ENCODE measurements at regions of chr12 and their contacts with region 1.

Region 1: GRCh38 chr12:87001102-87001501 is 744.9 kb upstream of the MGAT4C start:
- DNase-seq: no peak
- H3K4me3 ChIP-seq: no peak overlapping the region
- H3K27ac ChIP-seq: no peak overlapping the region
- H3K4me1 ChIP-seq: no peaks in the 10 kb centered on the region
- H3K27me3 ChIP-seq: no peaks in the 10 kb centered on the region
- CTCF ChIP-seq: no peak

Region 2: DNA sequence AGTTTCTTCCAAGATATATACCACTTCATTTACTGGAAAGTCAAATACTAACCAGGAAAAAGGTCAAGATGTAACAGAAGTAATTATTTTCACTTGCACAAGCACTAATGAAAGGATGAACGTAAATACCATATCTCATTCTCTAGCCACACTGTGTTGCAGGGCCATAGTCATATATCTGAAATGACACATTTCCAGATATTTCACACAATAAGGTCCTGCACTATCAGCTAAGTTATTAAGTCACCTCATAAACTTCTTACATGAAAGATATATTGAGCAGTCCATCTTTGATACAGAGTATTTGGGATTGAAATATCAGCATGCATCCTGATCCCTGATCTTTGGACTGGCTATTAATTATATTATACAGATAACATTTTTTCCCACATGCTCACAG is 38.4 kb after region 1 on chr12:
- CTCF ChIA-PET with region 1: no interaction called
- POLR2A ChIA-PET with region 1: interaction called, 11 read pairs
- intact Hi-C with region 1: no loop called
- DNase-seq: no peak
- H3K4me3 ChIP-seq: no peak overlapping the region
- H3K27ac ChIP-seq: no peak overlapping the region
- H3K4me1 ChIP-seq: no peaks in the 10 kb centered on the region
- H3K27me3 ChIP-seq: no peaks in the 10 kb centered on the region
- CTCF ChIP-seq: no peak

Region 3: GRCh38 chr12:87290505-87290904 is 289.4 kb after region 1 on chr12:
- CTCF ChIA-PET with region 1: no interaction called
- POLR2A ChIA-PET with region 1: no interaction called
- intact Hi-C with region 1: no loop called
- DNase-seq: no peak
- H3K4me3 ChIP-seq: no peak overlapping the region
- H3K27ac ChIP-seq: no peak overlapping the region
- H3K4me1 ChIP-seq: no peaks in the 10 kb centered on the region
- H3K27me3 ChIP-seq: no peaks in the 10 kb centered on the region
- CTCF ChIP-seq: no peak

Region 4: DNA sequence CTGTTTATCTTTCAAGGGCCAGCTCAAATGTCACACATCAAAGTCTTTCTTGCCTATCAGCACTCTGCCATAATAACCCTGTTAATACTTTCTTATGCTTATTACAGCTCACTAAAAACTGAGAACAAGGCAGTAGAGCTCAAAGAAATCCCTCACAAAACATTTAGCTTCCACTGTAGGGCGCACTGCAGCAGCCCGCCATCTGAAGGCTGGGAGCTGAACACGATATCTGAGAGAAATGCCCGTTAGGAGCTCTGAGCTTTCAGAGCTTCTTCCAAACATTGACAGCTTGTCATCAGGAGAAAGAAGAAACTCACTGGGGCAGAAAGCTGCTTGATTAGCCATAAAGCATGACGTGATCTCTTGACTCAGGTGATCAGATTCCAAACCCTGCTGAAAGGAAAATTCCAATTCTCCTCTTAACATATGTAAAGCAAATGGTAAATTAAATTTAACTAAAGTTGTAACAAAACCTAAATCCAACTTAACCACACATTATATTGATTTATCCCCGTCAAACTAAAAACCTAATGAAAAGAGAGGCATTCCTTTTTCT is 852.4 kb after region 1 on chr12:
- CTCF ChIA-PET with region 1: no interaction called
- POLR2A ChIA-PET with region 1: no interaction called
- intact Hi-C with region 1: no loop called
- DNase-seq: no peak
- H3K4me3 ChIP-seq: no peak overlapping the region
- H3K27ac ChIP-seq: no peak overlapping the region
- H3K4me1 ChIP-seq: no peaks in the 10 kb centered on the region
- H3K27me3 ChIP-seq: no peaks in the 10 kb centered on the region
- CTCF ChIP-seq: no peak